PC-3 (cell line): ENCODE measurements at regions of chr14 and their contacts with region 1.

Region 1: DNA sequence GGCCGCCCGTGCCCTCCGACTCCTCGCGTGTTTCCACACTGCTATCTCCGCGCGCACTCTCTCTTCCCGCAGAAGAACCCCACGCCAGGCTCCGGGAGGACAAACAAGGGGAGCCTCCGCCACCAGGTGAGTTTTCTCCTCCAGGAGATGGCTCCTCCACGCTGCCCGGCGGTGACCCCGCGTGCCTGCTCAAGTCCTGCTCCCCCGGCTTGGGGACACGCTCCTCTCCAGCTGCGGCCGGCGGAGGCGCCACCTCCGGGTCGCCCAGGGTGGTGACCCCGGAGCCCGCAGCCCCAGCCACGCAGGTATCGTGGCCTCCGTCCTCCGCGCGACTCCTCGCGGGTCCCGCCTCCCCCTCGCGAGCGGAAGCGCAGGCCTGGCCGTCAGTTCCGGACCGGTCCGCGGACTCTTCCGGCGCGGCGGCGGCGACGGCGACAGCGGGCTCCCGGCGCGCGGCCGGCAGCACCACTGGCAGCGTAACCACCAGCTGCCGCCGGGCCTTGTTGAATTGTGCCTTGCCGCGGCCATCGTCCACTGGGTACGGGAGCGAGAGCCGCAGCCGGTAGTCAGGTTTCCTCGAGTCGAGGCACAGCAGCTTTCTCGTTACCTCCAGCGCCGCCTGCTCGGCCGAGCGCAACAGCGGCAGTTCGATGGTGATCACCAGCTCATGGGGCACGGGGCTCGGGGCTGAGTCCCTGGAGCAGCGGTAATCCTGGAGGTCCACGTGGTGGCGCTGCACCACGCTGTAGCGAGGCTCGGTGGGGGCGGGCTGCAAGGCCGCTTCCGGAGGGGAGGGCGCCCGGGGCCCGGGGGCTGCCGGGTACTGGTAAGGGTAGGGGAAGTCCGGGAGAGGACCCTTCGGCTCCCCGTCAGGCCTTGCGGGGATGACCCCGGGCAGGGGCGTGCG is 1.2 kb downstream of the DNAAF2 start:
- DNase-seq: peak; percentile 97
- ATAC-seq: peak; percentile 78
- H3K4me3 ChIP-seq: peak overlapping the region; percentile 71
- H3K27ac ChIP-seq: peak overlapping the region; percentile 88
- H3K4me1 ChIP-seq: peaks cover 28% of the 10 kb centered on the region
- H3K27me3 ChIP-seq: no peaks in the 10 kb centered on the region
- CTCF ChIP-seq: peak; percentile 94

Region 2: GRCh38 chr14:48874711-48875110 is 759.2 kb before region 1 on chr14:
- CTCF ChIA-PET with region 1: no interaction called
- POLR2A ChIA-PET with region 1: no interaction called
- intact Hi-C with region 1: no loop called
- DNase-seq: no peak
- ATAC-seq: no peak
- H3K4me3 ChIP-seq: no peak overlapping the region
- H3K27ac ChIP-seq: no peak overlapping the region
- H3K4me1 ChIP-seq: no peaks in the 10 kb centered on the region
- H3K27me3 ChIP-seq: peaks cover 12% of the 10 kb centered on the region
- CTCF ChIP-seq: no peak

Region 3: DNA sequence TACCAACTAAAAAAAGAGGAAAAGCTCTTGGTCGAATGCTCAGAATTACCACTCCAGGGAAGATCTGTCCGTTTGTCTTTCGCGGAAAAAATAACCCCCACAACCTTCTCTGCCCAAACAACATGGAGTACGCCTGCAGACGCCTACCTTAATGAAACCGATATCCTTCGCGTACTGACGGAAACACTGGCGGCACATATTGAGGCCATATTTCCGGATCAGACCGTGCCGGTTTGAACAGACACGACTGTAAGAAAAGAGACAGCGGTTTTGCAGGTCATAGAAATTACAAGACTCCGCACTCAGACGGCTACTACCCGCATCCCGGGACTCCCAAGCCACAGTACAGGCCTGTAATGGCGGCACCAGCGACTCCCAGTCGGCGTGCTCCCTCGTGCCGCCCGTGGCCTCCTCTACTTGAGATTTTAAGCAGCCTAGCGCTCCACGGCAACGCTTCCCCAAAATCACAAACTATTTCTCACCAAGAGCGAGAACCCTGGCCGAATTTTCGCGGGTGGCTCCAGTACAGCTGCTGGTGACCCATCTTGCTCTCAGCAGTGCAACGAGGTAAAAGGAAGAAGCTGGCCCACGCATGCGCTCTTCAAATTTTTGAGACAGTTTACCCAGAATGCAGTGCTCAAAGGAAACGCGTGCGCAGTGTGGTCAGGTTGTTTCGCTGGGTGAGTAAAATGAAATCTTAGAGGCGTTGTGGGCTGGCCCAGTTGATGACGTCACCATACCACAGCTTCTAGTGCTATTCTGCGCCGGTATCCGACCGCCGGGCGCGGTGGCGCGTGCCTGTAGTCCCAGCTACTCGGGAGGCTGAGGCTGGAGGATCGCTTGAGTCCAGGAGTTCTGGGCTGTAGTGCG is 47.9 kb before region 1 on chr14 and contains the start of gene RPS29:
- CTCF ChIA-PET with region 1: interaction called, 3 read pairs
- POLR2A ChIA-PET with region 1: interaction called, 3 read pairs
- intact Hi-C with region 1: loop called (anchors 2 kb)
- DNase-seq: peak; percentile 100
- ATAC-seq: peak; percentile 89
- H3K4me3 ChIP-seq: peak within 1 kb of the TSS; percentile 93
- H3K27ac ChIP-seq: peak within 1 kb of the TSS; percentile 59
- H3K4me1 ChIP-seq: peaks cover 20% of the 10 kb centered on the region
- H3K27me3 ChIP-seq: no peaks in the 10 kb centered on the region
- CTCF ChIP-seq: no peak
- total RNA-seq, gene RPS29: 1,420 and 1,912 TPM in 2 replicates

Region 4: DNA sequence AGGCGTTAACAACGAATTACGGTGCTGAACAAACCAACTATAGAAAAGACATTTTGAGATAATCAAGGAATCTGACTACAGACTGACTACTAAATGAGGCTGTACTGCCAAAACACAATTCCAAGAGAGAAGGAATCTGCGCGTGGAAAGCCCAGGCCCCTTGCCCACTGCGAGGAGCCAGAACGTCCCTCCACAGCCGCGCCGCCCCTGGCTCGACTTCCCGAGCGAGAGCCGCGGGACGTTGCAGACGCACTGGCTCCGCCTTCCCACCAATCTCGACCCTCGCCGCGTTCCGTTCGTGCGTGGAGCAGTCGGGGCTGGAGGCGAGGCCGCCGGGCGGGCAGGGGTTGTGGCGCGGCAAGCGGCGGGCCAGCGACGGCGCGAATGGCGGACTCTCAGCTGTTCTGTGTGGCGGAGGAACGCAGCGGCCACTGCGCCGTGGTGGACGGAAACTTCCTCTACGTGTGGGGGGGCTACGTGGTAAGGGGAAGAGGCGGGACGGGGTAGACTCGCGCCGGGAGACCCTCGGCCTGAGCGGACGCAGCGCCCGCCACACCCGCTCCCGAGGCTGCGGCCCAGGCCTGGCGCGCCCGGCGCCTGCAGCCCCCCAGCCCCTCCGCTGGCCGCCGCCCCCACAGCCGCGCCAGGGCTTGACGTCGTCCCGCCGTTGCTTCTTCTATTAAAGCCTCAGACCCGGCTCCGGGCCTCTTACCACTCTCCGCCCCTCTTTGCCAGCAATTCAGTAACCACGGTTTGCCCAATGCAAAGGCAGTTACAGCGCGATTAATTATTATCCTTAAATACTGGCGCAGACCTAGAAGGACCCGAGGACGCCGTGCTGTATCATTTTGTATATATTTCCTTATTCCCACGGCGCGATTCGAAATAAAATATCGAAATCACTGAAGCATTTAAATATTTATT is 59.2 kb after region 1 on chr14 and contains the start of gene KLHDC1:
- CTCF ChIA-PET with region 1: interaction called, 3 read pairs
- POLR2A ChIA-PET with region 1: interaction called, 4 read pairs
- intact Hi-C with region 1: loop called (anchors 2 kb)
- DNase-seq: peak; percentile 68
- ATAC-seq: peak; percentile 72
- H3K4me3 ChIP-seq: peak within 1 kb of the TSS; percentile 87
- H3K27ac ChIP-seq: peak within 1 kb of the TSS; percentile 41
- H3K4me1 ChIP-seq: peaks cover 12% of the 10 kb centered on the region; the same call in 1 of the 2 replicates
- H3K27me3 ChIP-seq: no peaks in the 10 kb centered on the region
- CTCF ChIP-seq: no peak
- total RNA-seq, gene KLHDC1: 0.07 and 0.58 TPM in 2 replicates

Region 5: DNA sequence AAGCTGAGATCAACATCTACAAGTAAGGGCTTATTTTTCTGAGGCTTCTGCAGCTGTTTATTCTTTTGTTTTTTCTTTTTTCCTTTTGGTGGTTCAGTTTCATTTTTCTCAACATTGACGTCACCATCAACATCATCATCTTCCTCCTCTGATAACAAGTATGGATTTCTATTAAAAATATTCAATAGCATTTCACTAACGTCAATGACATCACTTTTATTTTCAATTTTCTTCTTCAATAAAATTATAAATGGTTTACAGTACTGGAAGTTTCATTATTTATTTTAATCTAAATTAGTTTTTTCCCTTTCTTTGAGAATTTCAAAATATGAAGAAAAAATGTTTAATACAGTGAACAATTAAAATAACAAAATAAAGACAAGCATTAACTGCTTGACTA is 194.7 kb after region 1 on chr14:
- CTCF ChIA-PET with region 1: interaction called, 3 read pairs
- POLR2A ChIA-PET with region 1: no interaction called
- intact Hi-C with region 1: loop called (anchors 2 kb)
- DNase-seq: no peak
- ATAC-seq: no peak
- H3K4me3 ChIP-seq: no peak overlapping the region
- H3K27ac ChIP-seq: no peak overlapping the region
- H3K4me1 ChIP-seq: no peaks in the 10 kb centered on the region
- H3K27me3 ChIP-seq: no peaks in the 10 kb centered on the region
- CTCF ChIP-seq: no peak

Region 6: DNA sequence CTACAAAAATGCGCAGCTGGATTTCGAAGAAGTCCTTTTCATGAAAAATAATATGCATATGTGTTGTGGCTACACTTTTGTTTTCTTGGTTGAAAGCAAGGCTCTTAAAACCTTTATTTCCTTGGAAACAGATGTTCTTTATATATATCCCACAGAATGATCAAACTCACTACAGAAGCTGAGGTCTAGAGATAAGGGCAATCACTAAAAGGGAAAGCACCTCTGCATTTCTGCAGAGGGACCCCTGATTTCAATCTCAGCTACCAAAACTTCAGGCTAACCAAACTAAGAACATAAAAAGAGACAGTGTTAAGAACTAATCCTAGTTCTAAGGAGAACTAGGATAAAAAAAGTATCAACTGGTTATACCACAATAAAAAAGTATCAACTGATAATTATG is 828.2 kb after region 1 on chr14:
- CTCF ChIA-PET with region 1: no interaction called
- POLR2A ChIA-PET with region 1: no interaction called
- intact Hi-C with region 1: no loop called
- DNase-seq: no peak
- ATAC-seq: no peak
- H3K4me3 ChIP-seq: no peak overlapping the region
- H3K27ac ChIP-seq: no peak overlapping the region
- H3K4me1 ChIP-seq: peaks cover 5% of the 10 kb centered on the region; the same call in 1 of the 2 replicates
- H3K27me3 ChIP-seq: no peaks in the 10 kb centered on the region
- CTCF ChIP-seq: no peak